ENCODE measurements at regions of chr9 and their contacts with region 1.

Region 1: GRCh38 chr9:5879419-5880181 is 11.1 kb upstream of the MLANA start:
- DNase-seq: no peak
- H3K4me3 ChIP-seq: peak overlapping the region in 1 of 3 donors; percentile 46
- H3K27ac ChIP-seq: peak overlapping the region in 1 of 2 donors; percentile 69
- H3K4me1 ChIP-seq: no peaks in the 10 kb centered on the region
- H3K27me3 ChIP-seq: no peaks in the 10 kb centered on the region
- CTCF ChIP-seq: no peak
- POLR2A ChIP-seq: no peak

Region 2: GRCh38 chr9:5939530-5939929 is 59.9 kb after region 1 on chr9:
- intact Hi-C with region 1: no loop called
- DNase-seq: no peak
- H3K4me3 ChIP-seq: no peak overlapping the region
- H3K27ac ChIP-seq: no peak overlapping the region
- H3K4me1 ChIP-seq: no peaks in the 10 kb centered on the region
- H3K27me3 ChIP-seq: no peaks in the 10 kb centered on the region
- CTCF ChIP-seq: no peak
- POLR2A ChIP-seq: no peak

Region 3: GRCh38 chr9:6072865-6073264 is 193.3 kb after region 1 on chr9:
- intact Hi-C with region 1: loop called (anchors 5 kb)
- DNase-seq: no peak
- H3K4me3 ChIP-seq: no peak overlapping the region
- H3K27ac ChIP-seq: no peak overlapping the region
- H3K4me1 ChIP-seq: no peaks in the 10 kb centered on the region
- H3K27me3 ChIP-seq: no peaks in the 10 kb centered on the region
- CTCF ChIP-seq: no peak
- POLR2A ChIP-seq: no peak

Region 4: GRCh38 chr9:6199596-6199995 is 320.0 kb after region 1 on chr9:
- intact Hi-C with region 1: no loop called
- DNase-seq: no peak
- H3K4me3 ChIP-seq: no peak overlapping the region
- H3K27ac ChIP-seq: no peak overlapping the region
- H3K4me1 ChIP-seq: no peaks in the 10 kb centered on the region
- H3K27me3 ChIP-seq: no peaks in the 10 kb centered on the region
- CTCF ChIP-seq: no peak
- POLR2A ChIP-seq: no peak

Region 5: GRCh38 chr9:7172154-7173125 is 1292.8 kb after region 1 on chr9:
- intact Hi-C with region 1: no loop called
- DNase-seq: no peak
- H3K4me3 ChIP-seq: no peak overlapping the region
- H3K27ac ChIP-seq: no peak overlapping the region
- H3K4me1 ChIP-seq: no peaks in the 10 kb centered on the region
- H3K27me3 ChIP-seq: no peaks in the 10 kb centered on the region
- CTCF ChIP-seq: no peak
- POLR2A ChIP-seq: no peak